Mucosa of descending colon (tissue), 3 donors: ENCODE measurements at regions of chr13 and their contacts with region 1.

Region 1: GRCh38 chr13:104301171-104301975 is 1235.2 kb upstream of the SLC10A2 start:
- DNase-seq: no peak
- ATAC-seq: no peak
- H3K4me3 ChIP-seq: no peak overlapping the region
- H3K4me1 ChIP-seq: no peaks in the 10 kb centered on the region
- CTCF ChIP-seq: no peak

Region 2: GRCh38 chr13:104854007-104854406 is 552.6 kb after region 1 on chr13:
- intact Hi-C with region 1: loop called in 1 of 2 experiments (anchors 5 kb)
- DNase-seq: no peak
- ATAC-seq: no peak
- H3K4me3 ChIP-seq: no peak overlapping the region
- H3K4me1 ChIP-seq: no peaks in the 10 kb centered on the region
- CTCF ChIP-seq: no peak